ENCODE measurements at regions of chr22 and their contacts with region 1.

Region 1: GRCh38 chr22:45709060-45709739 is 37.6 kb downstream of the ATXN10 start:
- DNase-seq: peak; percentile 27 to 90
- ATAC-seq: peak; percentile 90 to 92
- H3K4me3 ChIP-seq: no peak overlapping the region
- H3K27ac ChIP-seq: peak overlapping the region; percentile 86 to 94
- H3K4me1 ChIP-seq: peaks cover 87% of the 10 kb centered on the region
- CTCF ChIP-seq: no peak
- EP300 ChIP-seq: peak; percentile 89 to 93; a peak in 3 of 5 replicates
- POLR2A ChIP-seq: no peak
- RAD21 ChIP-seq: 0 out of 5 replicates have a peak, but pooled peaks of 1 of the 2 experiments have one; percentile 20

Region 2: DNA sequence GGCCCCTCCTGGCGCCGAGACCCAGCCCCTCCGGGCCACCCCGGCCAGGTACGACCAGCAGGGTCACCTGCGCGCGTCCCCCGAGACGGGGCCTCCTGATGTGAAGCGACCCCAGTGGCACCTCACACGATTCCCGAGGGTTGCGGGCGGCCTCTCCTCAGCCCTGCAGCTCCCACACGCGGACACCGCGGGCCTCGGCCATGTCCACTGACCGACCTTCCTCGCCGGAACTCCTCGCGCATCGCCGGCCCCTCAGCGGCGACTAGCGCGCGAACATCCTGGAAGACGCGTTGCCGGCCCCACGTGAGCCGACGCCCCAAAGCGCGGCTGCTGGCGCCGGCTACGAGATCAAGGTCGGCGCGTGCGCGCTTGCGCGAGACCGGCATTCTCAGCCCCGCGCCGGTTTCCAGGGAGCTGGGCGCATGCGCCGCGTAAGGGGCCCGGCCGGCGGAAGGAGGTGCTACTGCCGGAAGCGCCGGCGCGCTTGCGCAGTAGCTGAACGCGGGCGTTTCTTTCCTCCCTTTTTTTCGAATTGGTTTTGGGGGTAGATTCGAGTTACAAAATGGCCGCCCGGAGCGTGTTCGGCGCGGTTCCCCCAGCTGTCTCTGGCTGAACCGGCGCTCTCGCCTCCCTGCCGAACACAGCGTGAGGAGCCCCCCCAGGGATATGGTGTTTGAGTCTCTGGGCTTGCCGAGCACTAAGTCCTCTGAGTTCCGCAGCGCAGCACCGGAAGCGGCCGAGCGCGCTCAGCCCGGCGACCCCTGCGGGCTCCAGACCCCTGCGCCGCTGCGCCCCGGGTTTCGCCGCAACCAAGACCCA is 545.5 kb before region 1 on chr22 and contains the start of gene NUP50:
- CTCF ChIA-PET with region 1: no interaction called
- POLR2A ChIA-PET with region 1: no interaction called
- DNase-seq: peak; percentile 85 to 94
- ATAC-seq: peak; percentile 76 to 86
- H3K4me3 ChIP-seq: peak within 1 kb of the TSS; percentile 74
- H3K27ac ChIP-seq: peak within 1 kb of the TSS; percentile 93 to 97
- H3K4me1 ChIP-seq: peaks cover 45% of the 10 kb centered on the region
- CTCF ChIP-seq: no peak
- EP300 ChIP-seq: no peak
- POLR2A ChIP-seq: peak; percentile 57
- RAD21 ChIP-seq: no peak
- polyA plus RNA-seq, gene NUP50: 16.7 and 21.1 TPM in 2 replicates

Region 3: DNA sequence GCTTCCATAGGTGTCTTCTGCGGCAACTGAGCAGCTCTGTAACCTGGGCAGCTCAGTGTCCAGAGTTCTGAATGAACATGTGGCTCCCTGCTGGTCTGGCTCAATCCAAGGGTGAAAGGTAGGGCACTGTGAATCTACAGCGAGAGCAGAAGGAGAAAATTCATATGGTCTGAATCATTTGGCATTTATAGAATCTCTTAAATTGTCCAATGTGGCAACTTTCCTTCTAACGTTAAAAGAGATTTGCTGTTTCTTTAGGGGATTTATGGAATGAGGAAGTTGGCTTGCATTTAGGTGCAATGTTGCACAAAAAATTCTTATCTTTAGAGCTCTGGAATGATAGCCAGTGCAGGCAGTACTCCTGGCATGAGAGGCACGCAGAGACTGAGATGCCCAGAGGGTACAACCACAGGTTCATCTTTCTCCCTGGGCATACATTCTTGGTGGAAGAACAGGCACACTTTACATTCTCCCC is 20.6 kb before region 1 on chr22:
- CTCF ChIA-PET with region 1: interaction called, 5 read pairs
- POLR2A ChIA-PET with region 1: interaction called, 17 read pairs
- DNase-seq: peak; percentile 37 to 94
- ATAC-seq: peak; percentile 94 to 96
- H3K4me3 ChIP-seq: no peak overlapping the region; the same call in 2 of the 3 replicates
- H3K27ac ChIP-seq: peak overlapping the region; percentile 92 to 97
- H3K4me1 ChIP-seq: peaks cover 96% of the 10 kb centered on the region
- CTCF ChIP-seq: no peak
- EP300 ChIP-seq: peak; percentile 95 to 98
- POLR2A ChIP-seq: no peak
- RAD21 ChIP-seq: peak in 1 of 2 experiments; percentile 35; a peak in 3 of 5 replicates

Measured in A549 (cell line).